ENCODE measurements at regions of chr18 and their contacts with region 1.

Region 1: DNA sequence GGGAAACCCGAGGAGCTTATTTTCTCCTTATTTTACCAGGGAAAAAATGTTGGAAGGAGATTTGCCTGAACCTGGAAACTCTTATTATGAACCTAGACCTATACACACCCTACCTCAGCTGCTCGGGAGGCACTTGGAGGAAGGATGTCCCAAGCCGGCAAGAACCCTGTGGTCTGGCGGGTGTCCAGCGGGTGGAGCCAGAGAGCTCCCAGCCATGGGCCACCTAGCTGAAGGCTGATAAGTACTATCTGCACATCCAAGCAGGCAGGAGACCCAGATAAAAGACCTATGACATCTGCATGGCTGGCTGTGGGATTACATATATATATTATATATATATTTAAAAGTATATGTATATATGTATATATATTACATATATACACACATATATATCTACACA is 1.1 kb upstream of the SLC14A1 start:
- DNase-seq: peak; percentile 81
- H3K4me3 ChIP-seq: no peak overlapping the region
- H3K27ac ChIP-seq: no peak overlapping the region
- H3K4me1 ChIP-seq: no peaks in the 10 kb centered on the region
- H3K27me3 ChIP-seq: no peaks in the 10 kb centered on the region
- CTCF ChIP-seq: peak; percentile 41 to 73 (median 68)
- POLR2A ChIP-seq: no peak

Region 2: DNA sequence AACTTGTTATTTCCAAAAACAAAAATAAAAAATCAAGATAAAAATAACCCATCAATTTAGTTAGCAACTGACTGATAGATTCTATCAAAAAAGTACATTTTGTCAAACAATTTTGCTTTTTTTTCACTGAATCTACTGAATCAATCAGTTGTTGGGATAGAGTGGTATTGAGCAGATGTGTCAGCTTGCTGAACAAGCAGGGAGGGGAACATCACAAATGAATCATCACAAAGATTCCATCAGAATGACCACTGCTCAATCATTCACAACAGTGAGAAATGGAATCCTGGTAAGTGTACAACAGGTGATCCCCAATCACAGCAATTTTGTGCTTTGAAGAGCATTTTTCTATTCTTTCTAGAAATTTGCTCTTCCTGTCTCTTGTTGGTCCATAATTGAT is 120.0 kb before region 1 on chr18:
- intact Hi-C with region 1: no loop called
- DNase-seq: no peak
- H3K4me3 ChIP-seq: no peak overlapping the region
- H3K27ac ChIP-seq: no peak overlapping the region
- H3K4me1 ChIP-seq: no peaks in the 10 kb centered on the region
- H3K27me3 ChIP-seq: no peaks in the 10 kb centered on the region
- CTCF ChIP-seq: no peak
- POLR2A ChIP-seq: no peak

Region 3: DNA sequence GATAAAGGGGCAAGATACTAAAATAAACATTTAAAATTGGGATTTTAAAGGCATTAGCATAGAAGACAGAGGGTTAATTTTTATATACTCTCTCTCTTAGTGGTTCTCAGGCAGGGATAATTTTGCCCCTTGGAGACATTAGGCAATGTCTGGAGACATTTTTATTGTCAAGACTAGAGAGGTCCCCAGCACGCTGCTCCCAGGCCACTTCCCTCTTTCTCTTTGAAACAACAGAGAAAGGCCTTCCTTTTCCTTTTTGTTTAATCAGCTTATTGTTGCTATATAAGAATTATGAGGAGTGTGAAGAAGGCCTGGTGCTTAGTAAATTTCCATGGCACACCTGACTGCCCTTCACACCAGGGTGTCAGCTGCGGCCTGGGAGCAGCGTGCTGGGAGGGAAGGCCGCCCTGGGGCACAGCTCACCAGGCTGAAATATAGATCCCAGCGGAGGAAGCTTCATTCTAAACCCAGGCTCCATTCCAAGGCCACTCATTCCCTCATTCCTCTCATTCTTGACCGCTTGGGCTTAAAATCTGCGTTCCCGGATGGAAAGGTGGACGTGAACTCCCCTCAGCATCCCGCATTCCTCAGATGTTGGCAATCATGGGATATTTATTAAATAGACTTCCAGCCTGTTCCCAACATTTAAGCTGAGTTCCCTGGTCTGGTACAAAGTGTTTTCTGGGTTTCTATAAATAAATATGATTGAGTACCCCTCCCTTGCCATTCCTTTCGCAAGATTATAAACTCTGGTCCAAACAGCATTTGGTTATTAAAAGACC is 85.2 kb before region 1 on chr18:
- intact Hi-C with region 1: no loop called
- DNase-seq: no peak
- H3K4me3 ChIP-seq: no peak overlapping the region
- H3K27ac ChIP-seq: peak overlapping the region; percentile 63 to 67
- H3K4me1 ChIP-seq: no peaks in the 10 kb centered on the region
- H3K27me3 ChIP-seq: no peaks in the 10 kb centered on the region
- CTCF ChIP-seq: no peak
- POLR2A ChIP-seq: no peak

Region 4: DNA sequence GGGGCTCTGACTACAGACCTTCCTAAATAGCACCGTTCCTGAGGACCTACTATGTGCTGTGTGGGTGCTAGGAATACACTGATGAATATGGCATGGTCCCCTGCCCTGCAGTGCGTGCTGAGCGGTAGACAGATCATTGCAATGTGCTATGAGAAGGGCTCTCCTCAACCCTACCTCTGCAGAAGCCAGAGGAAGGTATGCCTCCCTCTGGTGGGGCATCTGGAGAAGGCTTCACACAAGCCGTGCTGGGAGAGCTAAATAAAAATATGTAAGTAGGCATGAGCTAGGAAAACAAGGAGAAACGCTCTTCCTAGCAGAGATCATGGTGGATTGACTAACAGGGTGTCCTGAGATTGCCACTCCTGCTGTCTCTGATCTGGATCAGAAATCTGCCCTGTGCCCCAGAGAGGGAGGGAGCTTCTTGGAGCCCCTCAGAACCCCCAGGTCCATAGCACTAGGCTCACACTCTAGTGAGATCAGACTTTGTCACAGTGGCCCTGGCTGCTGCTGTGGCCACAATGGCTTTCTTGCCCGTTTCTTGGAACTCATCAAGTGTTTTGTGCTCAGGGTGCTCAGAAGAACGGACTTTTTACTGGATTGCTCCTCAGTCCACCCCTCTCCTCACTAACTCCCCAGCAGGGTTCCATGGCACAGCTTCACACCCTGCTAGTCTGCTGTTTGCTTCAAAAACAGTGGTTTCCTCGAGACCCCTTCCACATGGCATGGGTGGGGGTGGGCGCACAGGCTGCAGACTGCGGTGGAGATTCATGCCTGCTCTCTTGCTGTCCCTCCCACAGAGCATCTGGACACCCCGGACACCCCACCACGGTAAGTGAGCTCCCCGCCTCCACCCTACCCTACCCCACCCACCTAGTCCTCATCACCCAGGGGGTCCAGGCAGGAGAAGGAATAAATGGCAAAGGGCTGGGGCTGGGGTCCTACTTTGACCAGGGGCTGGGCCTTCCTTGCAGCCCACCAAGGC is 116.8 kb after region 1 on chr18:
- intact Hi-C with region 1: loop called (anchors 10 kb)
- DNase-seq: peak; percentile 61
- H3K4me3 ChIP-seq: no peak overlapping the region
- H3K27ac ChIP-seq: no peak overlapping the region
- H3K4me1 ChIP-seq: no peaks in the 10 kb centered on the region
- H3K27me3 ChIP-seq: no peaks in the 10 kb centered on the region
- CTCF ChIP-seq: peak; percentile 19 to 80 (median 69)
- POLR2A ChIP-seq: no peak